PC-3 (cell line): ENCODE measurements at regions of chr17 and their contacts with region 1.

Region 1: DNA sequence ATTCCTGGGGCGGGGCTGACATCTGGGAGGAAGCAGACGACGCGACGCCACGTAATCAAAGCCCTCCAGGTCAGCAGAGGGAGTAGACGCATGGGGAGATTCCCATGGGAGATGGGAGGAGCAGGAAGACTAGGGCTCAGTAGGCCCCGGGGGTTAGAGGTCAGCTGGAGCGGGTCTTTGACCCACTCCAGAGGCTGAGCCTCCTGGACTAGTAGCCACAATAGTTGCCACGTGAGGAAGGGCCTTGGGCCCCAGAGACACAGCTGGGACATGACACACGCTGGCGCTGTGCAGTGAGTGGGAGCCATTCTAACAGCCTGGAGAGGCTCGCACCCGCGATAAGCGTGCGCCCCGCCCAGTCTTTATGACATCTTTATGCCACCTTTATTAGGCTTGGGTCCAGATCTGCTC is 95.7 kb upstream of the AMZ2 start:
- DNase-seq: no peak
- ATAC-seq: no peak
- H3K4me3 ChIP-seq: no peak overlapping the region
- H3K27ac ChIP-seq: no peak overlapping the region
- H3K4me1 ChIP-seq: no peaks in the 10 kb centered on the region
- H3K27me3 ChIP-seq: no peaks in the 10 kb centered on the region
- CTCF ChIP-seq: no peak

Region 2: DNA sequence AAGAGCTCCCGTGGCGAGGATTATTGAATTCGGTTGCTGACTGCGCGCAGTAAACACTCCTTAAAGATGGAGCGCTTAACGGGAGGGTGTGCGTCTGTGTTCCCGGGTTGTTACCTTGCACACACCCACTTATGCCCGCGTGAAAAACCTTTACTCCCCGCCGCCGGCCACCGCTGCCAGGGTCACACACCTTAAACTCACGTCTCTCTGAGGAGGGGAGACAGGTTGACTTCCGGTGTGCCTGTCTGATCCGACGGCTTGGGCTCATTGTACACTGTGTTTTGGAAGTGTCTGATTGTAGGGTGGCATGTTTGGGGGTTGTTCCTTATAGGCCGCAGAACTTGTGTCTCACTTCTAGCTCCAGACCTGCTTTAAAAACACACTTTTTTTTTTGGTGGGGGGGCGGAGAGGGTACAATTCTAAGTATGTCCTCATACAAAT is 49.8 kb before region 1 on chr17:
- CTCF ChIA-PET with region 1: no interaction called
- POLR2A ChIA-PET with region 1: no interaction called
- intact Hi-C with region 1: no loop called
- DNase-seq: peak; percentile 34
- ATAC-seq: peak; percentile 21
- H3K4me3 ChIP-seq: peak overlapping the region; percentile 79
- H3K27ac ChIP-seq: no peak overlapping the region
- H3K4me1 ChIP-seq: peaks cover 16% of the 10 kb centered on the region
- H3K27me3 ChIP-seq: no peaks in the 10 kb centered on the region
- CTCF ChIP-seq: no peak

Region 3: GRCh38 chr17:68124873-68125870 is 27.0 kb before region 1 on chr17:
- CTCF ChIA-PET with region 1: no interaction called
- POLR2A ChIA-PET with region 1: no interaction called
- intact Hi-C with region 1: no loop called
- DNase-seq: no peak
- ATAC-seq: no peak
- H3K4me3 ChIP-seq: no peak overlapping the region
- H3K27ac ChIP-seq: no peak overlapping the region
- H3K4me1 ChIP-seq: no peaks in the 10 kb centered on the region
- H3K27me3 ChIP-seq: no peaks in the 10 kb centered on the region
- CTCF ChIP-seq: no peak

Region 4: DNA sequence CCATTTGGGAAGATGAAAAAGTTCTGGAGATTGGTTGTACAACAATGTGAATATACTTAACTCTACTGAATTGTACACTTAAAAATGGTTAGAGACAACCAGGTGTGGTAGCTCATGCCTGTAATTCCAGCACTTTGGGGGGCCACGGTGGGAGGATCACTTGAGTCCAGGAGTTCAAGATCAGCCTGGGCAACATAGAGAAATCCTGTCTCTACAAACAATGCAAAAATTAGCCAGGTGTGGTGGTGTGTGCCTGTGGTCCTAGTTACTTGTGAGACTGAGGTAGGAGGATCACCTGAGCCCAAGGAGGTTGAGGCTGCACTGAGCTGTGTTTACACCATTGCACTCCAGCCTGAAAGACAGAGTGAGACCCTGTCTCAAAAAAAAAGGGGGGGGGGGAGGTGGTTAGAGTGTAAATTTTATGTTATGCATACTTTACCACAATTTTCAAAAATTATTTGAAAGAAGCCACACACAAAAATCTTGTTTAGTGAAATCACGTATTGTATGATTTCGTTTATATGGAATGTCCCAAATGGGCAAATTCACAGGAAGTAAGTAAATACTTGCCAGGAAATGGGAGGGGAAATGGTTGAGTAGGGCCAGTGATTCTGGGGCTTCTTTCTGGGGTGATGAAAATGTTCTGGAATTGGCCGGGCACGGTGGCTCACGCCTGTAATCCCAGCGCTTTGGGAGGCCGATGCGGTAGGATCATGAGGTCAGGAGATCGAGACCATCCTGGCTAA is 58.6 kb after region 1 on chr17:
- CTCF ChIA-PET with region 1: no interaction called
- POLR2A ChIA-PET with region 1: interaction called, 18 read pairs
- intact Hi-C with region 1: no loop called
- DNase-seq: peak; percentile 27
- ATAC-seq: no peak
- H3K4me3 ChIP-seq: no peak overlapping the region
- H3K27ac ChIP-seq: no peak overlapping the region
- H3K4me1 ChIP-seq: peaks cover 4% of the 10 kb centered on the region; the same call in 1 of the 2 replicates
- H3K27me3 ChIP-seq: no peaks in the 10 kb centered on the region
- CTCF ChIP-seq: no peak

Region 5: DNA sequence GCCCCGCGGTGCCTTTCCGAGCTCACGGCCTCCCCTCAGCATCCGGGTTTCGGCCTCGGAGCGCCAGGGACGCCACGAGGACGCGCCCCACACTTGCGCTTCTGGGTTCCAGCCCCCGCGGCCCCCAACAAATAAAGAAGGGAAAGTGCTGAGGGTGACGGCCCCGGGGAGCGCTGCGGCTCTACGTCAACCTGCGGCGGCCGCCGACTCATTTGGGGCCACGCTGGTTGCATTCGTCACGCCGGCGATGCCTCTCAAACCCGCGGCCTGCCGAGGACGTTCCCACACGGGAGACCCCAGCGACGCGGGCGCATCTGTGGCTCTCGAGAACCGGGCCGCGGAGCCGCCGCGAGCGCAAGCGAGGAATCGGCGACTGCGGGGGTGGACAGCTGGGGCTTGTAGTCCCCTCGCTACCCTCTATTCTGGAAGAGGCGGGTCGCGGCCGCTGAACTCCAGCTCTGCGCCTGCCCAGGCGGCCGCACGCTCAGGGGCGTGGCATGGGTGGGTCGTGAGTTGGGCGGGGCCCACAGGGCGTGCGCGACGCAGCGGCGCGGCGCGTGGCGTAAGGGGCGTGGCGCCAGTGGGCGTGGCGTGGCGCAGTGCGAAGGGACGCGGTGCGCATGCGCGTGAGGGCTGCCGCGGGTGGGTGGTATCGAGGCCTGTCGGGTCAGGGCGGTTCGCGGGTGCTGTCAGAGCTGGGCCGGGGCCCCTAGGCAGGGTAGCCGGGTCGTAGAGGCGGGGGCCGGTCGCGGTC is 95.5 kb after region 1 on chr17 and contains the start of gene AMZ2:
- CTCF ChIA-PET with region 1: no interaction called
- POLR2A ChIA-PET with region 1: no interaction called
- intact Hi-C with region 1: no loop called
- DNase-seq: peak; percentile 97
- ATAC-seq: peak; percentile 98
- H3K4me3 ChIP-seq: peak within 1 kb of the TSS; percentile 89
- H3K27ac ChIP-seq: peak within 1 kb of the TSS; percentile 49
- H3K4me1 ChIP-seq: peaks cover 11% of the 10 kb centered on the region
- H3K27me3 ChIP-seq: no peaks in the 10 kb centered on the region
- CTCF ChIP-seq: no peak
- total RNA-seq, gene AMZ2: 81.1 and 88.5 TPM in 2 replicates